ENCODE measurements at regions of chr12 and their contacts with region 1.

Region 1: DNA sequence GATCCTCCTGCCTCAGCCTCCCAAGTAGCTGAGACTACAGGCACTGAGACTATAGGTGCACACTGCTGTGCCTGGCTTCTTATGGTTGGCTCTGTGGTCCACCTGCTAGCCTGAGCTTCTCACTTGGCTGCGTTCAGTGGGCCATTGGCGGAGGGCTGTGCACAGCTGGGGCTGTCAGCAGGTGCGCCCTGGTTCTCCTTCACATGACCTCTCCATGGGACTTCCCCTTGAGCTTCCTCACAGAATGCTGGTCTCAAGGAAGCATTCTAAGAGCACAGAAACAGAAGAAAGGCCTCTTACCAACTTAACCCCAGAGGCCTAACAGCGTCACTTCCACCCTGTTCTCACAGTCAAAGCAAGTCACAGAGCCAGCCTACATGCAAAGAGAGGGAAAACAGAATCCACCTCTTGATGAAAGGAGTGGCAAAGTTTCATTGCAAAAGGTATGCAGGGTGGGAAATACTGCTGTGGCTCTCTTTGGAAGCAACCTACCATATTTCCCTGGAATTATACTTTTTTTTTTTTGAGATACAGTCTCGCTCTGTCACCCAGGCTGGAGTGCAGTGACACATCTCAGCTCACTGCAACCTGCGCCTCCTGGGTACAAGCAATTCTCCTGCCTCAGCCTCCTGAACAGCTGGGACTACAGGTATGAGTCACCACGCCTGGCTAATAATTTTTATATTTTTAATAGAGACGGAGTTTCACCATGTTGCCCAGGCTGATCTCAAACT is 9.3 kb downstream of the RILPL2 start:
- DNase-seq: no peak
- H3K4me3 ChIP-seq: no peak overlapping the region
- H3K27ac ChIP-seq: no peak overlapping the region
- H3K4me1 ChIP-seq: no peaks in the 10 kb centered on the region
- H3K27me3 ChIP-seq: no peaks in the 10 kb centered on the region
- CTCF ChIP-seq: no peak

Region 2: GRCh38 chr12:123445388-123446351 is 18.5 kb after region 1 on chr12:
- CTCF ChIA-PET with region 1: no interaction called
- POLR2A ChIA-PET with region 1: interaction called, 16 read pairs
- intact Hi-C with region 1: no loop called
- DNase-seq: no peak
- H3K4me3 ChIP-seq: no peak overlapping the region
- H3K27ac ChIP-seq: no peak overlapping the region
- H3K4me1 ChIP-seq: no peaks in the 10 kb centered on the region
- H3K27me3 ChIP-seq: no peaks in the 10 kb centered on the region
- CTCF ChIP-seq: no peak

Region 3: GRCh38 chr12:123580772-123581171 is 153.6 kb after region 1 on chr12:
- CTCF ChIA-PET with region 1: no interaction called
- POLR2A ChIA-PET with region 1: no interaction called
- intact Hi-C with region 1: no loop called
- DNase-seq: no peak
- H3K4me3 ChIP-seq: no peak overlapping the region
- H3K27ac ChIP-seq: no peak overlapping the region
- H3K4me1 ChIP-seq: peaks cover 4% of the 10 kb centered on the region
- H3K27me3 ChIP-seq: no peaks in the 10 kb centered on the region
- CTCF ChIP-seq: no peak